Activated T-helper 1 cell treated with anti-CD3 and anti-CD28 coated beads, Interleukin-12 subunit alpha, Interleukin-12 subunit beta, Interleukin-2, Interleukin-4 antibody, amounts not matched to agents 30 ng/mL and 10 ng/mL and 1 ng/mL, durations not matched to agents 14 hours and 24 hours and 36 hours (primary cell): ENCODE measurements at regions of chr12 and their contacts with region 1.

Region 1: DNA sequence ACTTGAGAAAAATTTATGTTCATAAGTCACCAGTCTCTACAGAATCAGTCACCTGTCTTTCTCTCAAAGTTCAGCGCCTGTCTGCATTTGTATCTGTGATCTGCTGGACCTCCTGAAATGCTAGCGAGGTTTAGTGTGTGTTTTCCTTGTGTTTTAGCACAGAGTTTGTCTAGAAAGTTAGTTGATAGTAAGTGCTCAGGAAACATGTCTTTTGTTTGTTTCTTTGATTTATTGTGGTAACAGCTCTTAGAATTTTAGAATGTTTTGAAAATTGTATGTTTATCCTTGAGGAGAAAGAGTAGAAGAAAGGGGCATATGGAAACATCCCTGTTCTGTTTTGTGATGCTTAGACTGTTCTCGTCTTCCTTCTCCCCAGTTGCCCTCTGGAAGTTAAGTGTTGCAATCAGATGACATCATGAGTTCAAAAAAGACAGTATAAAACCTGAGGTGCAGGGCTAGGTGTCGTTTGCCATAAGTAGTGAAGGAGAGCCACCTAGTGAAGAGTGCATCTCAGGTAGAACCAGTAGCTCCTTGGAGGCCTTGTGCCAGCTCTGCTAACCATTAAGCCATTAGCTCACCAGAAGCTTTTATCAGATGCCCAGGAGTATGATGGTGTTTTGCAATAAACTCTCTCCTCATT is 44.8 kb downstream of the FBXW8 start:
- DNase-seq: no peak
- H3K4me3 Mint-ChIP-seq: no peak overlapping the region
- H3K27ac Mint-ChIP-seq: no peak overlapping the region
- H3K4me1 Mint-ChIP-seq: peaks cover 32% of the 10 kb centered on the region
- H3K27me3 Mint-ChIP-seq: no peaks in the 10 kb centered on the region

Region 2: DNA sequence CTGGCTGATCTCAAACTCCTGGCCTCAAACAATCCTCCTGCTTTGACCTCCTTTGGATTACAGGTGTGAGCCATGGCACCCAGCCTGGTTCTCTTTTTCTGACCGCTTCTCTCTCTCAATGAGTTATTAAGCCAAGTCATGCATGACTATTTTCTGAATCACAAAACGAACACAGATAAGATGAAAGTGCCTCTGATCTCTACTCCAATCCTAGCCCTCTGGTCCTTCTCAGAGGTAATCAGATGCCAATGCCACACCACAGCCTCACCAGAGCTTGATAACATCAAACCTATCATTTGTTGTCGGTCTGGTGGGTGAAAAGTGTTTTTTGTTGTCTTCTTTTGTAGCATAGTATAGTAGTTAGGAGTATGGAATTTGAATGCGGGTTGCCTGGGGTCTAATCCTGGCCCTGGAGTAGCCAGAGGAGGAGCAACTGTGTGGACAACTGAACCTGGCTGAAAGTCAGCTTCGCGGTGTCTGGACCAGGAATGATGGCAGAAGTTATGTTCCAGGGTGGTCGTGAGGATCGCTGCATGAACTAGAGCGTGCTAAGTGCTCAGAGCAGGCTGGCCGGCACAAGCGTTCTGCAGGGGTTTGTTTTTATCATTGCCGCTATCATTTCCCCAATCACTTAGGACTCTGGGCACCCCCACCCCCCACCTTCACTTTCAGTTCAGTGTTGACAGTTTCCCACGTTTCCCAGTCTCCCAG is 295.6 kb before region 1 on chr12:
- intact Hi-C with region 1: no loop called
- DNase-seq: no peak
- H3K4me3 Mint-ChIP-seq: no peak overlapping the region
- H3K27ac Mint-ChIP-seq: no peak overlapping the region
- H3K4me1 Mint-ChIP-seq: no peaks in the 10 kb centered on the region
- H3K27me3 Mint-ChIP-seq: peaks cover 37% of the 10 kb centered on the region

Region 3: DNA sequence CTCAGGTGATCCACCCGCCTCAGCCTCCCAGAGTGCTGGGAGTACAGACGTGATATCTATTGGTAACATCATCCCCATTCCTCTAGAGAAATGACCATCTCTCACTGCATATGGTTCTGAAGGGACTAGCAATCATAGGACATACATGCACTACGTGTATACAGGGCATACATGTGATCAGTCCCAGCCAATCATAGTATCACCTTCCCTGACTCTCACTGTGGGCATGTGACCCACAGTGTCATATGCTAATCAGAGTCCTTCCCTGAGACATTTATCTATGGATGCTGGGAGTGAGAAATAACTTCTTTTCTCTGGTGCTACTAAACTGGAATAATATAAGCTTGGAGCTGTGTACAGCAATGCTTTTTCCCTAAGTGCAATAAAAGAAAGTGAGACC is 56.8 kb before region 1 on chr12:
- intact Hi-C with region 1: no loop called
- DNase-seq: no peak
- H3K4me3 Mint-ChIP-seq: no peak overlapping the region
- H3K27ac Mint-ChIP-seq: no peak overlapping the region
- H3K4me1 Mint-ChIP-seq: no peaks in the 10 kb centered on the region
- H3K27me3 Mint-ChIP-seq: peaks cover 31% of the 10 kb centered on the region

Region 4: DNA sequence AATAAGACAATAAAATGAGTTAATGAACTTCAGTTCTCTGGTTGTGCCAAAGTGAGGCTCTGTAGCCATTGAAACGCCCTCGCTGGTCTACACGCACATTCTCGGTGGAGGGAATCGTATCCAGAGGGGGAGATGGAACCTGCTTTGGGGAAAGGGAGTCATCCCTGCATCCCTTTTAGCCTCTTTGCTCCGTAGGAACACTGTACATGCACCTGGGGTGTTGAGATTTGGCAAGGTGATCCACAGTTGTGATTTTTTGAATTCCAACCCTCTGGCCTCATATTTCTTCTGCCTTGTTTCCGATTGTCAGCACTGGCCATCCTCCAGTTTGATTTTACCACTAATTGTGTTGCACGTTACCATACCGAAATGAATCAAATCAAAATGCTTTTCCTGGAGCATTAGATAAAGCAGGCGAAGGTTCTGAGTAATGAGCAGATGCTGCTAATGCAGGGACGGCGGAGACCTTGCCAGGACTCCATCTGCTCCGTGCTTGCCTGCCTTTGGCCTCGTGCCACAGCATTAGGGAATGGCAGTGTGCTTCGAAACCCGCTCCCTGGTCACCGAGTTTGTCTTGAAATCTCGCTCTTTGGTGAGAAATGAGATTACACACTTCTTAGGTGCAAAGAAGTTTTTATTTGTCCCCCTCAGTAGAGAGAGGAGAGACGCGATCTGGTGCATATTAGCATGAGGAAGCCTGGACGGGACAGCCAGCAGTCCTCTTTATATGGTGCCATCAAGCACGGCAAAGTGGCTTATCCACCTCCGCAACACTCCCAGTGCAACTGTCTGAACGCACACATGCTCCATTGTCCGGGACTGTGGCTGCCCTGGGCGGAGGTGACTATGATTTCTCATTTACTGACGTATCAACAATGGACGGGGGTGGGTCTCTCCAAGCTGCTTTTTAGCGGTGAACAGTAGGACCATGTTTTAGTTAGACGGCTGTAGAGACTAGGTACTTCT is 14.4 kb after region 1 on chr12:
- intact Hi-C with region 1: no loop called
- DNase-seq: no peak
- H3K4me3 Mint-ChIP-seq: no peak overlapping the region
- H3K27ac Mint-ChIP-seq: no peak overlapping the region
- H3K4me1 Mint-ChIP-seq: no peaks in the 10 kb centered on the region
- H3K27me3 Mint-ChIP-seq: no peaks in the 10 kb centered on the region

Region 5: GRCh38 chr12:116980083-116980482 is 24.6 kb after region 1 on chr12:
- intact Hi-C with region 1: no loop called
- DNase-seq: no peak
- H3K4me3 Mint-ChIP-seq: no peak overlapping the region
- H3K27ac Mint-ChIP-seq: no peak overlapping the region
- H3K4me1 Mint-ChIP-seq: peaks cover 19% of the 10 kb centered on the region
- H3K27me3 Mint-ChIP-seq: no peaks in the 10 kb centered on the region

Region 6: DNA sequence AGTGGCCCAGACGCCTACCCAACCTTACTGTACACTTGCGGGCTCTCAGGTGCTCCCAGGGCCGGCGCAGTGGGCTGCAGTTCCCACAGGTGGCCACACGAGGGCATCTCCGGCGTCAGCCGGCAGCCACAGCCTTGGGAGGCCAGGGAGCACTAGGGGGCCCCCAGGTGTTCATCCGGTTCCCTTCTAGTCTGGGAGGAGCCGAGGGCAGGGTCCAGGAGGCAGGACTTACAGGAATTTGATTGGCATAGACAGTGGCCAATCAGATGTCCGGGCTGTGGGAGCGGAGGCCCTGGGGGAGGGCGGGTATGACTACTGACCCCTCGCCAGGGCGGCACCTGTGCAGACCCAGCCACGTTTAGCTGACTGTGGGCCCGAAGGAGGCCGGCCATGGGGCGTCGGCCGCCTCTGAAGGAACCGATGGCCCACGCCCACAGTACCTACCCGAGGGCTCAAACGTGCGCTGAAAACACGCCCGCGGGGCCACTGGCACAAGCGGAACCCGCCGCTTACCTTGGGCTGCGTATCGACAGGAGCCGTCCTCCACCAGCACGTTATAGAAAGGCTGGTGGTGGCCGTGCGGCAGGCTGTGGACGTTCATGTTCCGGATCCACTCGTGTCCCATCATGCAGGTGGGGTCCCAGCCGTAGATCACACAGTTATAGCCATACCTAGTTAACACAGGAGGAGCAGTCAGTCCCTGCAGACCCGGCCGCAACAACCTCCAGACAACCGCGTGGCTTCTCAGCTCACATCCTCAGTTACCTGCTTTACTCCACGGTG is 200.0 kb after region 1 on chr12:
- intact Hi-C with region 1: loop called (anchors 5 kb)
- DNase-seq: peak; percentile 62
- H3K4me3 Mint-ChIP-seq: no peak overlapping the region
- H3K27ac Mint-ChIP-seq: no peak overlapping the region
- H3K4me1 Mint-ChIP-seq: peaks cover 29% of the 10 kb centered on the region
- H3K27me3 Mint-ChIP-seq: no peaks in the 10 kb centered on the region